Activated CD8-positive, alpha-beta T cell treated with anti-CD3 and anti-CD28 coated beads for 36 hours (primary cell): ENCODE measurements at regions of chr6 and their contacts with region 1.

Region 1: DNA sequence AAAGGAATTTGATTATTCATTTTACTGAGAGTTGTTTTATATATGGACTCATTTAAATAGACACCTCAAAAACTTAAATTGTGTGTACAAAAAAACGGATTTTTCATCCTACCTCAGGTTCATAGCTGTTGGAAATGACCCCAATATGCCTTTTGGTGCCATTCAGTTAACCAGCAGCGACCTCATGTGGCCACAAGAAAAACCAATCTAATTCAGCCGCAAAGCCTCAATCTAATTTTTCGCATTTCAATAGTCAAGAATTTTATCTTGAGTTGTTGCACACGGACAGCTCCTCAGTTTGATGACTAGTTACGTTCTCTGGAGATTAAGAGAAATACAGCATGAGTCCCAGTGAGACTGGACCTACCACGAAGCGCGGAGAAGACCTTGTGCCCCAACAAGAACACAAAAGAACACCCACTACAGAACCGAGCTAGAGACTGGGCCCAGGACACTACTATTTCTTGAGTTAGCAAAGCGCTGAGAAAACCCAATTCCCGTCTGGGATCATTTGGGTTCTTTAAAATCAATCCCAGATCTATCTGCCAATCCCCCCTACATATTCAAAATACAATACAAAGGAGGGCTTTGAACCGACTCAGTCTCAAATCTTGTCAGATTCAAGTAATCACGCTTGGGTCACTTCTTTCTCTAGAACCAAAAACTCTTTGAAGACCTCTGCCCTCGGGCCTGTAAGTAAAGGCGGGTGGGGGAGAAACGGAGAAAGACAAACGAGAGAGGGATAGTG is 1.1 kb downstream of the TCP11 start:
- DNase-seq: peak; percentile 68
- ATAC-seq: peak; percentile 73
- H3K4me3 Mint-ChIP-seq: peak overlapping the region; percentile 12
- H3K27ac Mint-ChIP-seq: no peak overlapping the region
- H3K4me1 Mint-ChIP-seq: peaks cover 13% of the 10 kb centered on the region
- H3K27me3 Mint-ChIP-seq: peaks cover 13% of the 10 kb centered on the region
- CTCF ChIP-seq: peak; percentile 91

Region 2: DNA sequence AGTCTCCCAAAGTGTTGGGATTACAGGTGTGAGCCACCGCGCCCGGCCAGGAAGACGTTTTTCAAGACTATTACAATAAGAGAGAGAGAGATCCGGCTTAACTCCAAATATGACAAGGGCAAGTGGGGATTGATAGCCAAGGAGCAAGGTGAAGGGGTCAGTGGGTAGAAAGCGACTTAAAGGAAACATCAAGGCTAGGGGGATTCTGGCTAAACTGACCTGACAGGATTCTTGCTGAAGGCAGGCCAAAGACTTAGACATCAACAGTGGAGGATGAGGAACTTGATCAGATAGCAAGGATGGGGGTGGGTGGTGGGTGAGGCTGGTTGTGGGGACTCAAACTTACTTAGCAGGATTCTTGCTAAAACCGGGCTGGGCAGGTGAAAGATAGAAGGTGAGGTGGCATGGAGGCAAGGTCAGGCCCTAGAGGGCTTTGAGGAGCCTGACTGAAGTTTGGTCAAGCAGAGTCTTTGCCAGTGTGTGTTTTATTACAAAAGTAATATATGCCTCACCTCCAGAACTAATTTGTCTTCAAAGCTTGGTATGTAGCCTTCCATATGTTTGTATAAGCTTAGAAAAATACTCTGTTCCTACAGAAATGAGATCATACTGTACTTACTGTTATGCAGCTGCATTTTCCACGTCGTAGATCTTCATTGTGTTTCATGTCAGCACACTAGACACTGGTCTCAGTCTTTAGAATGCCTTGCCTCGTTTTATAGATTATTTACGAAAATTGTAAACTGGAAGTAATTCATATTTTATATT is 189.4 kb before region 1 on chr6:
- CTCF ChIA-PET with region 1: interaction called, 10 read pairs
- POLR2A ChIA-PET with region 1: no interaction called
- intact Hi-C with region 1: no loop called
- DNase-seq: no peak
- ATAC-seq: no peak
- H3K4me3 Mint-ChIP-seq: no peak overlapping the region
- H3K27ac Mint-ChIP-seq: no peak overlapping the region
- H3K4me1 Mint-ChIP-seq: peaks cover 16% of the 10 kb centered on the region
- H3K27me3 Mint-ChIP-seq: no peaks in the 10 kb centered on the region
- CTCF ChIP-seq: no peak

Region 3: DNA sequence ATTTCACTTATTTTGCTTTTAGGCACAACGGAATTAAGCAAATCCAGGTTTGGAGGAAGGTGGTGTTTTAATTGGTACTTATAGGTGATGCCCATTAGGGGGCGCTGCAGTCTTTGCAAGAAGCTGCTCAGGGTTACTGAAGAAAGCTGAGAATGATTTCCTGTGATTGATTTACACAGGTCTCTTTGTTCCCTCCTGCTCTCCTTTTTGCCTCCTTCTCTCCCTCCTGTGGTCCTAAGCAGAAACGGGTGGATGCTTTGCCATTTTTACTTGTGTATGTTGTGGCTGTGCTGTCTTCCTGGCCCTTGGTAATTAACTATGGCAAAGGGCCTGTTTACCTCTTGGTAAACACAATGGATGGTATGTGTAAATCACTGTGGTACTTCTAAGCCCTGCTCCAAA is 153.2 kb before region 1 on chr6:
- CTCF ChIA-PET with region 1: interaction called, 70 read pairs
- POLR2A ChIA-PET with region 1: no interaction called
- intact Hi-C with region 1: loop called (anchors 5 kb)
- DNase-seq: peak; percentile 81
- ATAC-seq: peak; percentile 84
- H3K4me3 Mint-ChIP-seq: no peak overlapping the region
- H3K27ac Mint-ChIP-seq: no peak overlapping the region
- H3K4me1 Mint-ChIP-seq: no peaks in the 10 kb centered on the region
- H3K27me3 Mint-ChIP-seq: no peaks in the 10 kb centered on the region
- CTCF ChIP-seq: peak; percentile 83

Region 4: DNA sequence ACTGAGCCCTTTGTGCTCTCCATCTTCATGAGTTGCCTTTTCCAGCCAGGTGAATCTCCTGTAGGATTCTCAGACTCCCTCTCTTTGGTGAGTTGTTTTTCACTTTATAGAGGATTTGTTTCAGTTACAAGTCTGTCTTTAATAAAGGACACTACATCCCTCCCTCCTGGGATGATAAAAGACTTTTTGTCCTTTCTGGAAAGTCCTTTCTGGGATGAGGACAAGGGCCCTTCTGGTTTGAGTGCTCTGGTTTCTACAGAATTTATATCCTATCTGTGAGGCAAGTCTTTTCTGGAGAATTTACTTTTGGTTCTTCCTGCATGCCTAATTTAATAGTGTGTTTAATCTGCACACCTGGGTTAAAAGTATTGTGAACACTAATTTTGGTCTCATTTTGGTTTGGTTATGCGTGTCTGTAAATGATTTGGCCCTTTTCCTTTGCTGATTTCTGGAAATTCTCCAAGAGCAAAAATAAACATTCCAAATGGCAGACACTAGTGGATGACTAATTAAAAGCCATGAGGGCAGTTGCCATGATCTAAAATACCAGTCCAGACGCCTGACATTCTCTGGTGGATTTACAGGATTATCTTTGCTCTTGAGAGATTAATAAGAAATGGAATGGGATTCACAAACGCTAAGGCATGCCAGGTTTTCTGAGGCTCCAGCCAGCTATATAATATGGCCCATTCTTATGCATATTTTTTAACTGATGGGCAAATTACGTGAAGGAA is 43.8 kb before region 1 on chr6:
- CTCF ChIA-PET with region 1: interaction called, 10 read pairs
- POLR2A ChIA-PET with region 1: no interaction called
- intact Hi-C with region 1: no loop called
- DNase-seq: no peak
- ATAC-seq: no peak
- H3K4me3 Mint-ChIP-seq: no peak overlapping the region
- H3K27ac Mint-ChIP-seq: no peak overlapping the region
- H3K4me1 Mint-ChIP-seq: no peaks in the 10 kb centered on the region
- H3K27me3 Mint-ChIP-seq: peaks cover 2% of the 10 kb centered on the region
- CTCF ChIP-seq: no peak

Region 5: GRCh38 chr6:35161776-35162607 is 21.9 kb after region 1 on chr6:
- CTCF ChIA-PET with region 1: interaction called, 11 read pairs
- POLR2A ChIA-PET with region 1: no interaction called
- intact Hi-C with region 1: no loop called
- DNase-seq: no peak
- ATAC-seq: no peak
- H3K4me3 Mint-ChIP-seq: no peak overlapping the region
- H3K27ac Mint-ChIP-seq: no peak overlapping the region
- H3K4me1 Mint-ChIP-seq: no peaks in the 10 kb centered on the region
- H3K27me3 Mint-ChIP-seq: peaks cover 9% of the 10 kb centered on the region
- CTCF ChIP-seq: no peak

Region 6: GRCh38 chr6:35219683-35220326 is 79.7 kb after region 1 on chr6:
- CTCF ChIA-PET with region 1: interaction called, 10 read pairs
- POLR2A ChIA-PET with region 1: no interaction called
- intact Hi-C with region 1: no loop called
- DNase-seq: no peak
- ATAC-seq: no peak
- H3K4me3 Mint-ChIP-seq: no peak overlapping the region
- H3K27ac Mint-ChIP-seq: no peak overlapping the region
- H3K4me1 Mint-ChIP-seq: no peaks in the 10 kb centered on the region
- H3K27me3 Mint-ChIP-seq: peaks cover 33% of the 10 kb centered on the region
- CTCF ChIP-seq: no peak